ENCODE measurements at regions of chr7 and their contacts with region 1.

Region 1: GRCh38 chr7:157612664-157613561 is 276.1 kb downstream of the DNAJB6 start:
- DNase-seq: peak; percentile 80
- H3K4me3 Mint-ChIP-seq: peak overlapping the region; percentile 78
- H3K27ac Mint-ChIP-seq: peak overlapping the region; percentile 69
- H3K4me1 Mint-ChIP-seq: peaks cover 5% of the 10 kb centered on the region
- H3K27me3 Mint-ChIP-seq: no peaks in the 10 kb centered on the region

Region 2: GRCh38 chr7:157432957-157433576 is 179.8 kb before region 1 on chr7:
- CTCF ChIA-PET with region 1: interaction called, 4 read pairs
- POLR2A ChIA-PET with region 1: no interaction called
- intact Hi-C with region 1: loop called (anchors 10 kb)
- DNase-seq: peak; percentile 74
- H3K4me3 Mint-ChIP-seq: peak overlapping the region; percentile 48
- H3K27ac Mint-ChIP-seq: no peak overlapping the region
- H3K4me1 Mint-ChIP-seq: peaks cover 14% of the 10 kb centered on the region
- H3K27me3 Mint-ChIP-seq: no peaks in the 10 kb centered on the region

Region 3: DNA sequence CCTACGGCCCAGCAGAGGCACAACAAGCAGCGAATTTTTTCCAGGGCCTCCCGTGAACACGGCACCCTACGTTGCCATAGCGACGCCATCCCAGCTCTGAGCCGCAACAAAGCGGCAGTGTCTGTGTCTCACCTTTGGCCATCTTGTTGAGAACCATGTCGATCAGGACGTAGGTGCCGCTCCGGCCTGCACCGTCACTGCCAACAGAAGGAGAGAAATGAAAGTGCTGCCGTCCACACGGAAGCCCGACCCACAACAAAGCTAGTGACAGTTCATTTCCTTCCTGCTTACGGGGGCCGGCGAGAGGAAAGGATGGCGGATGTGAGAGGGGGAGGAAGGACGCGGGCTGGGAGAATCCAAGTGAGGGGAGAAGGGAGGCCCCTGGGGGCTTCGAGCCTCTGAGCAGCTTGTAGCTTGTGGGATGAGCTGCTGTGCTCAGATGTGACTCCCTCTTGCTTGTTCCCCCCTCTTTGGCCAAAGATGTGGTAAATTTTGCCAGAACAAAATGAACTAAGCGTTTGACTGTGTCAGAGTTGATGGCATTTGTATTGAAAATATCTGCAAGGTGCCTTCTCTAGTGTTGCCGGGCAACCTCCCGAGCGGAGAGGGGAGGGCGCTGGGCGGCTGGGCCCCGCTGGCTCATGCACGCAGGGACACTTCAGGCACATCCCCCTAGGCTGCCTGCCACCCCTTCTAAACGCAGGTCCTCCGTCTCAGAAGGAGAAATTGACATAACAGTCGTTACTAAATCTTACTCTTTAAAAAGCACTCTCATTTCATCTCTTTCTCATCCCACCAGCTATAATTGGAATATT is 43.9 kb before region 1 on chr7:
- CTCF ChIA-PET with region 1: no interaction called
- POLR2A ChIA-PET with region 1: no interaction called
- intact Hi-C with region 1: loop called (anchors 2 kb)
- DNase-seq: peak; percentile 74
- H3K4me3 Mint-ChIP-seq: peak overlapping the region; percentile 85
- H3K27ac Mint-ChIP-seq: peak overlapping the region; percentile 55
- H3K4me1 Mint-ChIP-seq: peaks cover 40% of the 10 kb centered on the region
- H3K27me3 Mint-ChIP-seq: no peaks in the 10 kb centered on the region

Measured in activated CD4-positive, alpha-beta memory T cell treated with anti-CD3 and anti-CD28 coated beads for 36 hours (primary cell).